Activated T-helper 2 cell treated with anti-CD3 and anti-CD28 coated beads, Interferon-gamma antibody, Interleukin-2, Interleukin-4, amounts not matched to agents 10 μg/mL and 5 μg/mL and 100 μg/mL, durations not matched to agents 14 hours and 24 hours and 36 hours (primary cell): ENCODE measurements at regions of chr5 and their contacts with region 1.

Region 1: DNA sequence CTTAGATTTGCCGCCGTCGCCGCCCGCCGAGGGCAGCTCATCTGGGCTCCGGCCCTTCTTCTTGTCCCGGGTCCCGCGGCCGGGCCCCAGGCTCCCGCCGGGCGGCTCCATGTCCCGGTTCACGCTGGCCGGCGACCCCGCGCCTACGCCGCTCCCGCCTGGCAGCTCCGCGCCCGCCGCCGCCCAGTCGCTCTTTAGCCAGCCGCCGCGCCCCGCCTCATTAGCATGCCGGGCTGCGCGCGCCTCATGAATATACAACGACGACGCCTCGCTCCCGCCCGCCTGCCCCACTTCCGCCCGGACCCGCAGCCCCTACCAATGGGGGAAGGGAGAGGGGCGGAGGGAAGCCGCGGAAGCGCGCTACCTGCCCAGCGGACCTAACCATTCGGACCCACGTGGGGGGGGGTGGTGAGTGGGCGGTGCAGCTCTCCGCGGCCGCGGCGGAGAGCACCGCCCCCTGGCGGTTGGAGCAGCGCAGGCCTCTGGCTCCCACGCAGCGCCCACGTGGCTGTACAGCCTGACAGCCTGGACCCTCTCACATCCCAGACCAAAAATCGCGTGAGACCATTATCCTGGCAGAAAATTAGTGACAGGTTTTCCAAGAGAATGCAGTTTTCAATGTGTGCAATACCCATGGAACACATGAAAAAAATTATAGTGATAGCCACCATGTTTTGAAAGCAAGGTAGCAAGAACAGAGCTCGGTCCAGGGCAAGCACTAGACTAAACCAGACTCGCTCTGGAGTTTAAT is at the start of gene DIAPH1:
- DNase-seq: peak; percentile 95
- H3K4me3 Mint-ChIP-seq: peak within 1 kb of the TSS; percentile 100
- H3K27ac Mint-ChIP-seq: peak within 1 kb of the TSS; percentile 98
- H3K4me1 Mint-ChIP-seq: peaks cover 49% of the 10 kb centered on the region
- H3K27me3 Mint-ChIP-seq: no peaks in the 10 kb centered on the region
- total RNA-seq, gene DIAPH1: 228 and 234 TPM in 2 replicates

Region 2: GRCh38 chr5:141077826-141078225 is 541.2 kb before region 1 on chr5:
- intact Hi-C with region 1: no loop called
- DNase-seq: no peak
- H3K4me3 Mint-ChIP-seq: no peak overlapping the region
- H3K27ac Mint-ChIP-seq: no peak overlapping the region
- H3K4me1 Mint-ChIP-seq: no peaks in the 10 kb centered on the region
- H3K27me3 Mint-ChIP-seq: no peaks in the 10 kb centered on the region

Region 3: GRCh38 chr5:141431286-141431685 is 187.7 kb before region 1 on chr5:
- intact Hi-C with region 1: no loop called
- DNase-seq: no peak
- H3K4me3 Mint-ChIP-seq: no peak overlapping the region
- H3K27ac Mint-ChIP-seq: no peak overlapping the region
- H3K4me1 Mint-ChIP-seq: peaks cover 2% of the 10 kb centered on the region
- H3K27me3 Mint-ChIP-seq: peaks cover 24% of the 10 kb centered on the region

Region 4: GRCh38 chr5:141585594-141585993 is 33.4 kb before region 1 on chr5:
- intact Hi-C with region 1: loop called (anchors 5 kb)
- DNase-seq: no peak
- H3K4me3 Mint-ChIP-seq: no peak overlapping the region
- H3K27ac Mint-ChIP-seq: no peak overlapping the region
- H3K4me1 Mint-ChIP-seq: peaks cover 9% of the 10 kb centered on the region
- H3K27me3 Mint-ChIP-seq: no peaks in the 10 kb centered on the region

Region 5: GRCh38 chr5:141597394-141597793 is 21.6 kb before region 1 on chr5:
- intact Hi-C with region 1: loop called (anchors 1 kb)
- DNase-seq: no peak
- H3K4me3 Mint-ChIP-seq: no peak overlapping the region
- H3K27ac Mint-ChIP-seq: no peak overlapping the region
- H3K4me1 Mint-ChIP-seq: peaks cover 54% of the 10 kb centered on the region
- H3K27me3 Mint-ChIP-seq: no peaks in the 10 kb centered on the region

Region 6: DNA sequence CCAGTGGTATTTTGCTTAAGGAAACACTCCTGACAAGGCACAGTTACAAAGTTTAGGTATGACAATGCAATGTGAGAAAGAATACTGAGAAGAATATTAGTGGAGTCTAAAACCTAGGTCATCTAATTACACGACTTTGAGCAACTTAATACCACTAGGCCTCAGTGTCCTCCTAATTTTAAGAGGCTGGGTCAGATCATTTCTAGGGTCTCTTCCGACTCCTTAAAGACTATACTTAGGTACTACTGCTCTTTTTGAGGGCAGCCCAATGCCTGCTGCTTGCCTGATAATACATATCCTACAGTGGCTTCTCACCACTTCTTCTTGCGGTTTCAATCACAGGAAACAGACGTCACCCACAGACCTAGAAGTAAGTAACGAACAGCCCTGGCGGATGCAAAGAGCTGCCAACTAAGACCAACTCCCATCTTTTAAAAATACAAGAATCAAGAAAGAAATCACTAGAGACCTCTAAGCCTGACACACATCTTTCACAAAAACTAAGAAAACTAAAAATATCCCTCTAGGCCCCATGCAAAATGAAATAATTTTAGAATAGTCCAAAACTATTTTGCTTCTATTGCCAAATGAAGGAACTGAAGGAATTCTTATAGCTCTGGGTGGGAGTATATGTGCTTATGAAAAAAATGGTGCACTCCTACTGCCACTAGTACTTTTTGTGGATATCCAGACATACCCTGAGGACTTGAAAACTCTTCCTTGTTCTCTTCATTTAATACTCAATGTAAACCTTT is 13.3 kb before region 1 on chr5:
- intact Hi-C with region 1: loop called (anchors 1 kb)
- DNase-seq: peak; percentile 72
- H3K4me3 Mint-ChIP-seq: peak overlapping the region; percentile 67
- H3K27ac Mint-ChIP-seq: peak overlapping the region; percentile 90
- H3K4me1 Mint-ChIP-seq: peaks cover 69% of the 10 kb centered on the region
- H3K27me3 Mint-ChIP-seq: no peaks in the 10 kb centered on the region

Region 7: DNA sequence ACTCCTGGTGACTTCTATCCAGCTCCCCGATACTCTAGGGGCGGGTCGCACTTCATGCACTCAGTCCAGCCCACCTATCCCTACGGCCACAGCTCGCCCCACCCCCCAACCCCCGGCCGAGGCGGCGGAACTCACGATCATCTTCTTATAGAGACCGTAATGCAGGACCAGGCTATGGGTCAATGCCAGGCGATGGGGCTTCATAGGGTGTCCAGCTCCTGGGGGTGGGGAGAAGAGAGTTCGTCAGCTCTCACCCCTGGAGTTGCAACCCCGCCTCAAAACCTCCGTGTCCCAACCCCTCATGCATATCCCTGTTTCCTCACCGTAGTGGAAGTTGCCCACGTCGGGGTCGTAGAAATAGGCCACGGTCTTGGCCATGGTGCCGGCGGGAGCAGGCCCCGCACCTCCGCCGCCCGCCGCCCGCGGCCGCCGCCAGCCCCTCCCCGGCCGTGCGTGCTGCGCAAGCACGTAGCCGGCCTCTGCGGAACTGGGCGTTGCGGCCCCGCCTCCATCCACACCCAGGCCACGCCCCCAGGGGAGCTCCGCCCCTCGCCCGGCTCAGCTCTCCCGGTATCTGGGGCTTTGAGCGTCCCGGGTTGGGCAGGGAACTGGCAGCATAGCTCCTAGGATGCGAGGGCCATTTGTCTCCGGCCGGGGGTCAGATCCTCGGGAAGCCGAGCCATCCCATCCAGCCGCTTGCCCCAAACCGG is 17.6 kb after region 1 on chr5 and contains the starts of genes HDAC3 and RELL2:
- intact Hi-C with region 1: loop called (anchors 1 kb)
- DNase-seq: peak; percentile 93
- H3K4me3 Mint-ChIP-seq: peak within 1 kb of the TSS; percentile 88
- H3K27ac Mint-ChIP-seq: peak within 1 kb of the TSS; percentile 81
- H3K4me1 Mint-ChIP-seq: peaks cover 37% of the 10 kb centered on the region
- H3K27me3 Mint-ChIP-seq: no peaks in the 10 kb centered on the region
- total RNA-seq, gene HDAC3: 92.4 and 95.2 TPM in 2 replicates
- total RNA-seq, gene RELL2: 15.9 and 16.1 TPM in 2 replicates

Region 8: DNA sequence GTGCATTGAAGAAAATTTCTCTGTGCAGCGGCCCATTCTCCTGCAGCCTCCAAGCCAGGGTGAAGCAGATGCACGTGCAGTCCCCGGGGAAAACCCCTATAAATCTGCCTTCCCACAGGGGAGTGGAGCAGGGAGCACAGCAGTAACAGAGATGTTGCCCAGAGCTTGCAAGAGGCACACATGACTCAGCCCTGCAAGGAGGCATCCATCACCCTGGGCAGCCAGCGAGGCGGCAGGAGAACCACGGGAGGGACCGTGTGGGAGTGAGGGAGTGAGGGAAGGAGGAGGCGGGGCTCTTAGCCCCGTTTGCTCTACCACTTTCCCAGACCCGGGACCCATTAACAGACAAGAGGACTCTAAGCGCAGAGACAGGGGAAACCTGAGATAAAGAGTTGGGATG is 159.2 kb after region 1 on chr5:
- intact Hi-C with region 1: no loop called
- DNase-seq: no peak
- H3K4me3 Mint-ChIP-seq: no peak overlapping the region
- H3K27ac Mint-ChIP-seq: no peak overlapping the region
- H3K4me1 Mint-ChIP-seq: peaks cover 6% of the 10 kb centered on the region
- H3K27me3 Mint-ChIP-seq: no peaks in the 10 kb centered on the region

Region 9: GRCh38 chr5:141821361-141821925 is 202.5 kb after region 1 on chr5:
- intact Hi-C with region 1: no loop called
- DNase-seq: no peak
- H3K4me3 Mint-ChIP-seq: no peak overlapping the region
- H3K27ac Mint-ChIP-seq: no peak overlapping the region
- H3K4me1 Mint-ChIP-seq: no peaks in the 10 kb centered on the region
- H3K27me3 Mint-ChIP-seq: peaks cover 28% of the 10 kb centered on the region